Cardiac septum (tissue), 1 donor: ENCODE measurements at regions of chr12 and their contacts with region 1.

Region 1: DNA sequence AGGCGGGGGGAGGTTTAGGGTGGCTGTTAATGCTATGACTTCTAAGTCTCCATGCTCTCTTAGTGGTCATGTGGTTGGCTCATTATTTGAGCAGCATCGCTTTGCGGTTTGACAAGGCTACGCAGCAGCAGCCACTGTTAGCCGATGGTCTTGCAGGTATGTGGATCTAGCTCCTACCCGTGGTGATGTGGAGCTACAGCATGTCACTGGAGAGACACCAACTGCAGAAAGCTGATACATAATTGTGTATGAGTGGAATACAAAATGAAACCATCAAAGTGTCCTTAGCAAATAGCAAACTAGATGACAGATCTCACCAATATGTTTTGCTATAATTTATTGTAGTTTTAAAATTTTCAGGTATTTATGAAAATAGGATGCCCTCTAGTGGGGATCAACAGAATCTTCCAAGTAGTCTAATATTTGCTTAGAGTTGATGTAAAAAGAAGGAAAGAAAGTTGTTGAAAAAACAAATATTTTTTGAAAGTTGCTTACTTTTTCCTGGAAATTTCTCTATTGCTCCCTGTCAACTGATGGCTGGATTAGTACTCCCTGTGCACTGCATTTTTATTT is 94.9 kb downstream of the NAV3 start:
- DNase-seq: peak; percentile 75

Region 2: GRCh38 chr12:77724367-77724957 is 201.2 kb before region 1 on chr12:
- intact Hi-C with region 1: loop called (anchors 2 kb)
- DNase-seq: no peak

Region 3: GRCh38 chr12:77855548-77855947 is 70.1 kb before region 1 on chr12:
- intact Hi-C with region 1: no loop called
- DNase-seq: peak; percentile 76